K562 (cell line): ENCODE measurements at regions of chr4 and their contacts with region 1.

Region 1: DNA sequence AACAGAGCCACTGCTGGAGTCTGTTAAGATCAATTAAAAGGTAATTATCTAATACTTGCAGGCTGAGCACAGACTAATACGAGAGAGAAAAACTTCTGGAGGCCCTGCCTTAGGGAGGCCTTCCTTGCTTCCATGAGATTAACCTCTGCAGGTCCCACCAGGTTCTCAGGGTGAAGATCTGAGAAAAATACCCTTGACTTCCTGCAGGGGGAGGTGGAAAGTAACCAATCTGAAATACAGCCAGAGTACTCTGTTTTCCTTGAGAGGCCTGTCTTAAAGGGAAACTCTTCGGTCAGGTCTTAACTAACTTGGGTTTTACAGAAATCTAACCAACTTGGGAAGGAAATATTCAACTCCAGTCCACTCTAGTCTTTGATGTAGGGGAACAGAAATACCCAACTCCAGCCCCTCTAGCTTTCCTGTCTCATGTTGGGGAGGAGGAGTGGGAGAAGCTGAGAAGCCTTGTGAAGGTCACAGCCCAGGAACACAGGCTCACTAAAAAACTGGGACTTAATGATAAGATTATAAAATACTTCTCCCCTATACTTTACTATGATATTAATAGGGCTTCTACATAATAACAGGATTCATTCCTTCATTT is 77.1 kb downstream of the TBCK start:
- DNase-seq: peak; percentile 28 to 65 (median 46)
- ATAC-seq: peak; percentile 100
- H3K4me3 ChIP-seq: no peak overlapping the region
- H3K27ac ChIP-seq: no peak overlapping the region
- H3K4me1 ChIP-seq: no peaks in the 10 kb centered on the region
- H3K27me3 ChIP-seq: no peaks in the 10 kb centered on the region
- CTCF ChIP-seq: peak; percentile 55 to 69 (median 61)
- EP300 ChIP-seq: no peak
- POLR2A ChIP-seq: no peak
- RAD21 ChIP-seq: peak in 1 of 2 experiments; percentile 43; a peak in 3 of 4 replicates

Region 2: GRCh38 chr4:105875233-105875632 is 363.7 kb before region 1 on chr4:
- CTCF ChIA-PET with region 1: no interaction called
- POLR2A ChIA-PET with region 1: no interaction called
- in situ Hi-C with region 1: no loop called
- intact Hi-C with region 1: no loop called
- DNase-seq: no peak
- ATAC-seq: no peak
- H3K4me3 ChIP-seq: no peak overlapping the region
- H3K27ac ChIP-seq: no peak overlapping the region
- H3K4me1 ChIP-seq: no peaks in the 10 kb centered on the region
- H3K27me3 ChIP-seq: no peaks in the 10 kb centered on the region
- CTCF ChIP-seq: no peak
- EP300 ChIP-seq: no peak
- POLR2A ChIP-seq: no peak
- RAD21 ChIP-seq: no peak

Region 3: DNA sequence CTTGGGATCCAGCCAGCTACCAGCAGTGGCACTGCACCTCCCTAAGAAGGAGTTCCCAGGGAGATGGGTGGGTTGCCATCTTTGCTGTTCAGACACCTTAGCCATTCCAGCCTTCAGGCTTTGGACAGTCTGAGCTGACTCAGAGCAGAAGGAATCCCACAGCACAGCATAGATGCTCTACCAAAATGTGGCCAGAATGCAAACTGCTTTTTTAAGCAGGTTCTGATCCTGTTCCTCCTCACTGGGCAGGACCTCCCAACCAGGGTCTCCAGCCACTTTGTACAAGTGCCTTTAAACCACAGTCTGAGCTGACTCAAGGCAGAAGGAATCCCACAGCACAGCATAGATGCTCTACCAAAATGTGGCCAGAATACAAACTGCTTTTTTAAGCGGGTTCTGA is 134.6 kb before region 1 on chr4:
- CTCF ChIA-PET with region 1: no interaction called
- POLR2A ChIA-PET with region 1: no interaction called
- in situ Hi-C with region 1: no loop called
- intact Hi-C with region 1: no loop called
- DNase-seq: no peak
- ATAC-seq: no peak
- H3K4me3 ChIP-seq: no peak overlapping the region
- H3K27ac ChIP-seq: no peak overlapping the region
- H3K4me1 ChIP-seq: no peaks in the 10 kb centered on the region
- H3K27me3 ChIP-seq: no peaks in the 10 kb centered on the region
- CTCF ChIP-seq: no peak
- EP300 ChIP-seq: no peak
- POLR2A ChIP-seq: no peak
- RAD21 ChIP-seq: no peak

Region 4: GRCh38 chr4:106502106-106502699 is 263.3 kb after region 1 on chr4:
- CTCF ChIA-PET with region 1: interaction called, 7 read pairs
- POLR2A ChIA-PET with region 1: no interaction called
- in situ Hi-C with region 1: no loop called
- intact Hi-C with region 1: loop called (anchors 5 kb)
- DNase-seq: peak; percentile 24 to 64 (median 42)
- ATAC-seq: peak; percentile 95
- H3K4me3 ChIP-seq: no peak overlapping the region
- H3K27ac ChIP-seq: no peak overlapping the region
- H3K4me1 ChIP-seq: no peaks in the 10 kb centered on the region
- H3K27me3 ChIP-seq: no peaks in the 10 kb centered on the region
- CTCF ChIP-seq: peak; percentile 66 to 70 (median 68)
- EP300 ChIP-seq: no peak
- POLR2A ChIP-seq: no peak
- RAD21 ChIP-seq: peak; percentile 44 to 67; a peak in 3 of 4 replicates